Calu3 (cell line): ENCODE measurements at regions of chr1 and their contacts with region 1.

Region 1: GRCh38 chr1:201488817-201489589 is 17.9 kb downstream of the CSRP1 start:
- DNase-seq: peak; percentile 61
- H3K4me3 Mint-ChIP-seq: no peak overlapping the region
- H3K27ac Mint-ChIP-seq: peak overlapping the region; percentile 0
- H3K4me1 Mint-ChIP-seq: no peaks in the 10 kb centered on the region
- H3K27me3 Mint-ChIP-seq: no peaks in the 10 kb centered on the region
- CTCF ChIP-seq: no peak

Region 2: DNA sequence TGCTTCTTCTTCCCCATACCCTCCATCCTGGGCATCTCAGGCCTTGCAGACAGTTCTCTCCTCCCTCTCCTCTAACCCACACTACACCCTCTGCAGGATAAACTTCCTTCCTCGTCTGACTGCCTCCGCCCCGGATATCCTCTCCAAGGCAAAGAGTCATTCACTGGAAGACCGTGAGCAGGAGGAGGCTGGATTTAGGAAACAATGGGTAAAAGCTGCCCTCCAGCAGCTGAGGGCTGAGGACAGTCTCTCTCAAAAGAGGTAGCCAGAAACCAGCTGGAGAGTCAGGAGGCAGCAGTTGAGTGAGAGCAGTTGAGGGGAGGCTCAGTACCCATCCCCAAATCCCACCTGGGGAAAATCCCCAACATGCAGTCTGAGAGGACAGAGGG is 16.5 kb after region 1 on chr1:
- CTCF ChIA-PET with region 1: interaction called, 172 read pairs
- intact Hi-C with region 1: no loop called
- DNase-seq: peak; percentile 50
- H3K4me3 Mint-ChIP-seq: peak overlapping the region; percentile 63
- H3K27ac Mint-ChIP-seq: peak overlapping the region; percentile 50
- H3K4me1 Mint-ChIP-seq: peaks cover 53% of the 10 kb centered on the region
- H3K27me3 Mint-ChIP-seq: no peaks in the 10 kb centered on the region
- CTCF ChIP-seq: no peak

Region 3: GRCh38 chr1:202029171-202029665 is 540.2 kb after region 1 on chr1:
- CTCF ChIA-PET with region 1: no interaction called
- intact Hi-C with region 1: no loop called
- DNase-seq: no peak
- H3K4me3 Mint-ChIP-seq: no peak overlapping the region
- H3K27ac Mint-ChIP-seq: peak overlapping the region; percentile 67
- H3K4me1 Mint-ChIP-seq: peaks cover 67% of the 10 kb centered on the region
- H3K27me3 Mint-ChIP-seq: no peaks in the 10 kb centered on the region
- CTCF ChIP-seq: no peak